GM13977 (cell line): ENCODE measurements at regions of chr14 and their contacts with region 1.

Region 1: GRCh38 chr14:77067632-77068514 is 30.2 kb upstream of the CIPC start:
- DNase-seq: peak; percentile 73
- CTCF ChIP-seq: peak; percentile 97

Region 2: GRCh38 chr14:76710056-76711010 is 357.5 kb before region 1 on chr14:
- in situ Hi-C with region 1: loop called (anchors 25 kb)
- DNase-seq: peak; percentile 66
- CTCF ChIP-seq: peak; percentile 58

Region 3: GRCh38 chr14:76882651-76883050 is 185.2 kb before region 1 on chr14:
- in situ Hi-C with region 1: loop called (anchors 10 kb)
- DNase-seq: no peak
- CTCF ChIP-seq: no peak